ENCODE measurements at regions of chr12 and their contacts with region 1.

Region 1: GRCh38 chr12:15546102-15546701 is 223.9 kb downstream of the PTPRO start:
- DNase-seq: peak; percentile 74
- ATAC-seq: peak; percentile 80
- H3K4me3 ChIP-seq: peak overlapping the region; percentile 33 to 74 (median 51)
- H3K4me3 Mint-ChIP-seq: peak overlapping the region; percentile 84
- H3K27ac ChIP-seq: peak overlapping the region; percentile 89 to 99
- H3K27ac Mint-ChIP-seq: peak overlapping the region; percentile 100
- H3K4me1 ChIP-seq: peaks cover 34 to 44% of the 10 kb centered on the region in 2 donors
- H3K4me1 Mint-ChIP-seq: peaks cover 59% of the 10 kb centered on the region
- H3K27me3 ChIP-seq: no peaks in the 10 kb centered on the region
- H3K27me3 Mint-ChIP-seq: no peaks in the 10 kb centered on the region
- CTCF ChIP-seq: no peak

Region 2: DNA sequence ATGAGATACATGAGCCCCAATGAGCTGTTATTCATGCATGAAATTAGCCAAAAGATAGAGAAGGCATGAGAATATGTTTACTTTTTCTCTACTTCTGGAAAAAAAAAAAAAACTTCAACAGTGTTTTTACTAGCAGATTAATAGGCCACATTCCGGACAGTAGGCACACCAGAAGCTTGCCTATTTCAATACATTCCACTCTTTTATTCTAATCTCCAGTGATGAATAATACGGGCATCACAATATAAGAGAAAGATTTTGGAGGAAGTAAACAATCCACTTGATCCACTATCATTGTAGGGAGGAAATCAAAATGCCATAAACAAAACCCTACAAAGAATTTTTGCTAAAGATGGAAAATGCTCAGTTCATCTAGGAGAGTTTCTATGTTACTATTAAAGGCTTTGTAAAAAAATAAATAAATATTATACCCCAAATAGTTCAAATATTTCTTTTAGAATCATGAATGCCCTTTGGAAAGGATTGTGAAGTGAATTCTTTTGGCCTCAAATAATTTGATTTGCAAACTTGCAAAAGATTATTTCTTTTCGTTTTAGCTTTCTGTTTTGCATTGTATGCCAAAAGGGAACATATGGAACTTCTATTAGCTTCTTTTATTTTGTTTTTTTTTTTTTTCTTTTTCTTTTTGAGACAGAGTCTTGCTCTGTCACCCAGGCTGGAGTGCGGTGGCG is 10.4 kb after region 1 on chr12:
- CTCF ChIA-PET with region 1: interaction called, 13 read pairs
- POLR2A ChIA-PET with region 1: no interaction called
- intact Hi-C with region 1: no loop called
- DNase-seq: no peak
- ATAC-seq: no peak
- H3K4me3 ChIP-seq: no peak overlapping the region
- H3K4me3 Mint-ChIP-seq: no peak overlapping the region
- H3K27ac ChIP-seq: no peak overlapping the region
- H3K27ac Mint-ChIP-seq: no peak overlapping the region
- H3K4me1 ChIP-seq: no peaks in the 10 kb centered on the region
- H3K4me1 Mint-ChIP-seq: peaks cover under 1% of the 10 kb centered on the region
- H3K27me3 ChIP-seq: no peaks in the 10 kb centered on the region
- H3K27me3 Mint-ChIP-seq: no peaks in the 10 kb centered on the region
- CTCF ChIP-seq: no peak

Region 3: DNA sequence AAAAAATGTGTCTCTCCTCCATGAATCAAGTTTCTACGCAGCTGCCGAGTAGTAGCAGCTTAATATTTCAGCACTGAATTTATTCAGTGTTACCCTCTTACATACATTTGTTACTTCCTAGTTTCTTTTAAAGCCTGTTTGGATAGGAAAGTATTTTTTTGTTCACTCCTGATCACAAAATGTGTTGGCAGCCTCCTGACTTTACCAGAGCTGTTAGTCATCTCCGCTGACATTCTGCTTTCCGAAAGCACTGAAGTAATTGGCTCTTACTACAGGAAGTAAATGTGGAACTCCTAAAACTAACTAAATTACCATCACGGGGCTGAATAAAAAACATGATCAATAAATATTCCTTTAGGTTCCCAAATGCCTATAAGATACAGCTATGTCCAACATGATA is 17.5 kb after region 1 on chr12:
- CTCF ChIA-PET with region 1: interaction called, 66 read pairs
- POLR2A ChIA-PET with region 1: no interaction called
- intact Hi-C with region 1: loop called (anchors 2 kb)
- DNase-seq: peak; percentile 42
- ATAC-seq: peak; percentile 64
- H3K4me3 ChIP-seq: peak overlapping the region in 4 of 5 experiments; percentile 18 to 51 (median 35)
- H3K4me3 Mint-ChIP-seq: peak overlapping the region; percentile 78
- H3K27ac ChIP-seq: peak overlapping the region; percentile 28 to 46
- H3K27ac Mint-ChIP-seq: peak overlapping the region; percentile 23
- H3K4me1 ChIP-seq: peaks cover 3 to 5% of the 10 kb centered on the region in 2 donors
- H3K4me1 Mint-ChIP-seq: peaks cover 22% of the 10 kb centered on the region
- H3K27me3 ChIP-seq: no peaks in the 10 kb centered on the region
- H3K27me3 Mint-ChIP-seq: no peaks in the 10 kb centered on the region
- CTCF ChIP-seq: no peak

Region 4: GRCh38 chr12:15575671-15576541 is 29.7 kb after region 1 on chr12:
- CTCF ChIA-PET with region 1: interaction called, 66 read pairs
- POLR2A ChIA-PET with region 1: interaction called, 8 read pairs
- intact Hi-C with region 1: loop called (anchors 1 kb)
- DNase-seq: no peak
- ATAC-seq: no peak
- H3K4me3 ChIP-seq: no peak overlapping the region
- H3K4me3 Mint-ChIP-seq: no peak overlapping the region
- H3K27ac ChIP-seq: no peak overlapping the region
- H3K27ac Mint-ChIP-seq: no peak overlapping the region
- H3K4me1 ChIP-seq: peaks cover 7 to 9% of the 10 kb centered on the region in 2 donors
- H3K4me1 Mint-ChIP-seq: peaks cover 6% of the 10 kb centered on the region
- H3K27me3 ChIP-seq: no peaks in the 10 kb centered on the region
- H3K27me3 Mint-ChIP-seq: no peaks in the 10 kb centered on the region
- CTCF ChIP-seq: no peak

Region 5: GRCh38 chr12:15584366-15585041 is 38.3 kb after region 1 on chr12:
- CTCF ChIA-PET with region 1: interaction called, 68 read pairs
- POLR2A ChIA-PET with region 1: no interaction called
- intact Hi-C with region 1: no loop called
- DNase-seq: peak; percentile 76
- ATAC-seq: peak; percentile 63
- H3K4me3 ChIP-seq: no peak overlapping the region
- H3K4me3 Mint-ChIP-seq: no peak overlapping the region
- H3K27ac ChIP-seq: no peak overlapping the region
- H3K27ac Mint-ChIP-seq: peak overlapping the region; percentile 65
- H3K4me1 ChIP-seq: no peaks in the 10 kb centered on the region
- H3K4me1 Mint-ChIP-seq: no peaks in the 10 kb centered on the region
- H3K27me3 ChIP-seq: no peaks in the 10 kb centered on the region
- H3K27me3 Mint-ChIP-seq: no peaks in the 10 kb centered on the region
- CTCF ChIP-seq: peak; percentile 86

Measured in B cell (primary cell).